Uterus (tissue), 4 donors: ENCODE measurements at regions of chr22 and their contacts with region 1.

Region 1: DNA sequence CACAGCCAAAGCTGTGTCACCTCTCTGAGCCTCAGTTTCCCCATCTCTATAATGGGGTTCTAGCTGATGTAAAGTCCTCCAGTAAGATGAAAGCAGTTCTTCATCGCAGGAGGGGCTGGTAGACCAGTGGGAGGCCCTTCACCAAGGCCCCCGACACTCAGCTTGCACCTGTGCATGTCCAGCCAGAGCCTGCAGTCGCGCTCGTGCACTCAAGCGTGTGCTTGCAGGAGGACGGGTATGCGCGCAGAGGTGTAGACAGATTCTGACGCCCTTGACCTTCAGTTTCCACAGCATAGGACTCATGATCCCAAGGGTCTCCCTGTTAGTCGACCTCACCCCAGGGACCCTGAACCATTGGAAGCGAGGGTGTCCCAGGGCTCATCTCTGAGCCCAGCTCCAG is 633.7 kb downstream of the TBC1D22A start:
- DNase-seq: no peak
- H3K4me3 ChIP-seq: no peak overlapping the region
- H3K27ac ChIP-seq: no peak overlapping the region
- H3K4me1 ChIP-seq: no peaks in the 10 kb centered on the region
- H3K27me3 ChIP-seq: no peaks in the 10 kb centered on the region
- CTCF ChIP-seq: no peak
- POLR2A ChIP-seq: no peak

Region 2: DNA sequence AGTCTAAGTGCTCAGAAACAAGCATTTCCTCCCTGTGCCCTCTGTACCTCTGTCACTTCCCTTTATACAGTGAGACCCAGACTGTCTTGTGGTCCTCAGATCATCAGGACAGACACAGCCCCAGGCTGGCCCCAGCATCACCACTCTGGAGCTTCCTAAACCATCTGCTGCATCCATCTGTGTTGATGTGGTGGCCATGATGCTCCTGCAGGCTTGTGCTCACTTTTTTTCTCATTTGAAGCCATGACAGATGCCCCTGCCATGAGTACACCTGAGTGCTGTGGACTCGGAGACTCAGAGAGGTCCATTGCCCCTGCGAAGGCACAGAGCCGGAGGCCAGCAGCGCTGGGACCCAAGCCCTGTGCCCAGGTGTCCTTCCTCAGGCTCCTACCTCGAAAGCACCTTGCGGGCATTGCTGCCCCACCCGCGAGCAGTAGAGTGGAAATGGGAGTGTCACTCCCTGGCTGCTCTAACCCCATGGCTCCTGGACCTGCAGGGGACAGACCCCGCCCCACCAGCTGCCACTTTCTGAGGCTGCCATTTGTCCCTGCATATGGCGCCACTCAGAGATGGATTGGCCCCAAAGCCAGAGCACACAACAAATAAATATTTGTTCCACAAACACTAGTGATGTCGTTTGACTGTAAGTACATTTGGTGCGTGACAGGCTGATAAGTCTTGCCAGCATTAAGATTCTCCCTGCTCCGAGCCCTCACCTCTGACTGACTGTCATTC is 40.2 kb before region 1 on chr22:
- intact Hi-C with region 1: loop called (anchors 2 kb)
- DNase-seq: no peak
- H3K4me3 ChIP-seq: no peak overlapping the region
- H3K27ac ChIP-seq: no peak overlapping the region
- H3K4me1 ChIP-seq: no peaks in the 10 kb centered on the region
- H3K27me3 ChIP-seq: no peaks in the 10 kb centered on the region
- CTCF ChIP-seq: no peak
- POLR2A ChIP-seq: no peak